Heart left ventricle (tissue), 16 donors: ENCODE measurements at regions of chr9 and their contacts with region 1.

Region 1: DNA sequence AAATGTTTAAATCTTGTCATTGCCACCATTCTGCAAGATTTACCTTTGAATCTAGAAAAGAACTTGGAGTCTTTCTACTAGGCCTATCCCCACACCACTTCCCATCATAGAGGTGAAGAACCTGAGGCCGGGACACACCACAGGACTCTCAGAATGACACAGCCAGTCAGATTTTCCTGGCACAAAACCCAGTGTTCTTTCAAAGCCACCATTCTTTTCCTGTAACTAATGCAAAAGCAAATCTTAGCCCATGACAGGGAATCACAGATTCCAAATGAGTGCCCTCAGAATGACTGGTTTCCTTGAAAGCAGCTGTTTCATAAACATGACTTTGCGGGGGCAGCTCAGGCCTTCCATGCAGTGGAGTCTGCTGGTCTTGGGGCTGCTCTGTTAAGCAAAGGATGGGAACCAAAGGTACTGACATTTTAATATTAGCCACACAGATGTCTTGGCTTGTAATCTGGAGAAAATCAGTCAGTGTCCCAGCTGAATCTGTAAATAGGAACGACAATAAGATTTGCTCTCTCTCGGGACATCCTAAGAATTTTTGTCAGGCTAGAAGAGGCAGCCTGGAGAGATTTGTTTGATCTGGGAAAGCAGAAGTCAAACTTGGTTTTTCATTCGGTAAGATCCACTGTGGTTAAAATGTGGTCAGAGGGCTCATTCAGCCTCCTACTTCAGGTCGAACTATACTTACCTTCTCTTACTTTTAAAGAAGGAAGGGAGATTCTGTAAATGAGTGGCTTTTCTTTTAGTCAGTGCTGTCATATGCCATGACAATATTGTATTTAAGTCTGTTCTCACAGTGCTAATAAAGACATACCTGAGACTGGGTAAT is 115.1 kb downstream of the PALM2AKAP2 start:
- DNase-seq: peak in 4 of 5 donors; percentile 32 to 61 (median 37)
- ATAC-seq: peak; percentile 30 to 82 (median 64)
- H3K4me3 ChIP-seq: no peak overlapping the region
- H3K27ac ChIP-seq: peak overlapping the region in 10 of 12 donors; percentile 16 to 61 (median 44)
- H3K4me1 ChIP-seq: peaks cover 0 to 41% (median 8%) of the 10 kb centered on the region in 12 donors
- H3K27me3 ChIP-seq: no peaks in the 10 kb centered on the region
- CTCF ChIP-seq: no peak
- POLR2A ChIP-seq: no peak

Region 2: DNA sequence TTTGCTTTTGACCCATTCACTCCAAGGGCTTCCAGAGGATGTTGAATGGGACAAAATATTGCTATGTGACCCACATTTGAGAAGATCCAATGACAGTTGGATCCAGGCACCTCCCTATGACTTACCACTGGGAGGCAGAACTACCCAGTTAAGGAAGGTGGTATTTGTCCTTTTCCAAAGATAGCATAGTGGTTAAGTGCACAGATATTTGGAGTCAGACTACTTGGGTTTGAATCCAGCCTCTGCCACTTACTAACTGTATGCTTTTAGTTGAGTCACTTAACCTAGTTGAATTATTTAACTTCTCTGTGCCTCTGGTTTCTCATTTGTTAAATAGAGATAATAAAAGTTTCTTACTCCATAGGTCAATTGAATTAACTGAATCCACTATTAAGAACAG is 189.6 kb before region 1 on chr9:
- intact Hi-C with region 1: loop called in 1 of 10 experiments (anchors 10 kb)
- DNase-seq: no peak
- ATAC-seq: peak in 1 of 4 donors; percentile 38
- H3K4me3 ChIP-seq: no peak overlapping the region
- H3K27ac ChIP-seq: no peak overlapping the region
- H3K4me1 ChIP-seq: peaks cover 0 to 38% (median 19%) of the 10 kb centered on the region in 12 donors
- H3K27me3 ChIP-seq: no peaks in the 10 kb centered on the region
- CTCF ChIP-seq: peak in 1 of 12 donors; percentile 8
- POLR2A ChIP-seq: no peak

Region 3: GRCh38 chr9:110007477-110008270 is 112.5 kb after region 1 on chr9:
- intact Hi-C with region 1: no loop called
- DNase-seq: no peak
- ATAC-seq: no peak
- H3K4me3 ChIP-seq: no peak overlapping the region
- H3K27ac ChIP-seq: no peak overlapping the region
- H3K4me1 ChIP-seq: no peaks in the 10 kb centered on the region
- H3K27me3 ChIP-seq: no peaks in the 10 kb centered on the region
- CTCF ChIP-seq: no peak
- POLR2A ChIP-seq: no peak

Region 4: GRCh38 chr9:110543631-110544051 is 648.5 kb after region 1 on chr9:
- intact Hi-C with region 1: loop called in 1 of 10 experiments (anchors 10 kb)
- DNase-seq: peak in 4 of 5 donors; percentile 32 to 44 (median 35)
- ATAC-seq: peak; percentile 22 to 60 (median 46)
- H3K4me3 ChIP-seq: no peak overlapping the region
- H3K27ac ChIP-seq: peak overlapping the region in 8 of 12 donors; percentile 2 to 70 (median 45)
- H3K4me1 ChIP-seq: peaks cover 0 to 34% (median 2%) of the 10 kb centered on the region in 12 donors
- H3K27me3 ChIP-seq: no peaks in the 10 kb centered on the region
- CTCF ChIP-seq: no peak
- POLR2A ChIP-seq: no peak